PC-3 (cell line): ENCODE measurements at regions of chr13 and their contacts with region 1.

Region 1: GRCh38 chr13:63435668-63436287 is 2020.1 kb upstream of the PCDH20 start:
- DNase-seq: peak; percentile 73
- ATAC-seq: peak; percentile 60
- H3K4me3 ChIP-seq: no peak overlapping the region
- H3K27ac ChIP-seq: peak overlapping the region; percentile 91
- H3K4me1 ChIP-seq: peaks cover 10% of the 10 kb centered on the region
- H3K27me3 ChIP-seq: no peaks in the 10 kb centered on the region
- CTCF ChIP-seq: no peak

Region 2: DNA sequence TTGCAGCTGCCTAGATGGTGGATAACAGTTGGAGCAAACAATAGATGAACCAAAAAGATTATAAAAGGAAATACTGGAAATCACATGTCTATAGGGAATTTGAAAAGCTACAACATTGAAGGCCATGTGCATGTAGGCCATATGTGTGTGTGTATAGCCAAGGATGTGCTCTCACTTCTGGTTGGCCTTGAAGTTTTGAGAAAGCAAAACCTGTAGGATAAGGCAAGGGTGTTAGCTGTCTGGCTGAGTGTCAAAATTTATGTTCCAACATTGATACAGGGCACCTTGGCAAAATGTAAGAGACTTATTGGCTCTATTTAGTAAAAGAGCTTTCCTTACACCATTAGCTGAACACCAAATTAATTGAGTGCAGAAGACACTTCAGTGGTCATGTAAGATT is 296.5 kb before region 1 on chr13:
- CTCF ChIA-PET with region 1: no interaction called
- POLR2A ChIA-PET with region 1: no interaction called
- intact Hi-C with region 1: loop called (anchors 10 kb)
- DNase-seq: no peak
- ATAC-seq: no peak
- H3K4me3 ChIP-seq: no peak overlapping the region
- H3K27ac ChIP-seq: no peak overlapping the region
- H3K4me1 ChIP-seq: no peaks in the 10 kb centered on the region
- H3K27me3 ChIP-seq: no peaks in the 10 kb centered on the region
- CTCF ChIP-seq: no peak

Region 3: DNA sequence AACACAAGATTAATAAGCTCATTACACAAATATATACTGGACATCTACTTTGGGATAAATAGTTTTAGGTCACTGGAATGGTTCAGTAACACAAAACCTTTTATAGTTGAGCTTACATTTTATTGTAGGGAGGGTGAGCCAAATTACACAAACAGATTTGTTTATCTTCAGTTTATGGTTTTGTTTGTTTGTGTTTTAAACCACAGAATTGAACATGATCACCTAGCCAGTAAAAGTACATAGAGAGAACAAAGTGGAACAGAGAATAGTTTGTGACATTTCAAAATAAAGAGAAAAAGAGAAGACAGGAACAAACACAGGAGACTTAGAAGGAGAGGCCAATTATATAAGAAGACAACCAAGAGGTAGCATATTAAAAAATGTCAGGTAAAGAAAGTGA is 89.9 kb before region 1 on chr13:
- CTCF ChIA-PET with region 1: no interaction called
- POLR2A ChIA-PET with region 1: no interaction called
- intact Hi-C with region 1: loop called (anchors 2 kb)
- DNase-seq: peak; percentile 46
- ATAC-seq: peak; percentile 86
- H3K4me3 ChIP-seq: no peak overlapping the region
- H3K27ac ChIP-seq: no peak overlapping the region
- H3K4me1 ChIP-seq: no peaks in the 10 kb centered on the region; the same call in 1 of the 2 replicates
- H3K27me3 ChIP-seq: no peaks in the 10 kb centered on the region
- CTCF ChIP-seq: no peak